Right lobe of liver (tissue), 6 donors: ENCODE measurements at regions of chr12 and their contacts with region 1.

Region 1: DNA sequence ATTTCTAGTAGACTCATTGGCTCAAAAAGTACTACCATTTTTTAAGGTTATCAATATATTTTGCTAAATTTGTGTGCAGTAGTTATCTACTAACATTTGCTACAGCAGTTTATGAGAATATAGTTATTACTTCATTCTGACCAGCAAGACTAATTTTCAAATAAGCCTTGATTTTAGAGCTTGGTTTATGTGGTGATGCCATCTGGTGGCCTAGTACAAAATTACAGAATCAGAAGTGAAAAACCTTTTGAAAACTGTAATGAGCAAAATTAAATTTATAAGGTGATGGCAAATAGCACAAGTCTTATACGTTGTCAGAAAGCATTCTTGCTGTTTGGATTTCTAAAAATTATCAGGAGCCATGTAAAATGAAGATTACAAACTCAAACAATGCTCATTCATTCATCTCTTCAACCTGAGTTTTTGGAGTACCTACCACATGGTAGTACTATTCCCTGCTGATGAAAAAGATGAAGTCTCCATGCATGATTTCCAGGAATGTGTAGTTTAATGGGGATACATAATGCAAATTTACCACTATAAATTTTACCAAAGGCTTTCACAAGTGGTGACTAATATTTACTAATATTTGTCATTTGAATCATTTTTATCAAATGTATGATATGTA is 51.0 kb downstream of the MAGOHB start:
- DNase-seq: no peak
- ATAC-seq: peak in 3 of 4 donors; percentile 60 to 68 (median 61)
- H3K4me3 ChIP-seq: no peak overlapping the region
- H3K27ac ChIP-seq: no peak overlapping the region
- H3K4me1 ChIP-seq: no peaks in the 10 kb centered on the region
- H3K27me3 ChIP-seq: no peaks in the 10 kb centered on the region
- CTCF ChIP-seq: peak; percentile 65 to 81 (median 74)
- POLR2A ChIP-seq: no peak

Region 2: GRCh38 chr12:10235761-10236631 is 326.4 kb before region 1 on chr12:
- intact Hi-C with region 1: loop called in 1 of 2 experiments (anchors 10 kb)
- DNase-seq: no peak
- ATAC-seq: peak; percentile 87 to 88 (median 88)
- H3K4me3 ChIP-seq: no peak overlapping the region
- H3K27ac ChIP-seq: no peak overlapping the region
- H3K4me1 ChIP-seq: no peaks in the 10 kb centered on the region
- H3K27me3 ChIP-seq: no peaks in the 10 kb centered on the region
- CTCF ChIP-seq: peak; percentile 82 to 90 (median 88)
- POLR2A ChIP-seq: no peak

Region 3: DNA sequence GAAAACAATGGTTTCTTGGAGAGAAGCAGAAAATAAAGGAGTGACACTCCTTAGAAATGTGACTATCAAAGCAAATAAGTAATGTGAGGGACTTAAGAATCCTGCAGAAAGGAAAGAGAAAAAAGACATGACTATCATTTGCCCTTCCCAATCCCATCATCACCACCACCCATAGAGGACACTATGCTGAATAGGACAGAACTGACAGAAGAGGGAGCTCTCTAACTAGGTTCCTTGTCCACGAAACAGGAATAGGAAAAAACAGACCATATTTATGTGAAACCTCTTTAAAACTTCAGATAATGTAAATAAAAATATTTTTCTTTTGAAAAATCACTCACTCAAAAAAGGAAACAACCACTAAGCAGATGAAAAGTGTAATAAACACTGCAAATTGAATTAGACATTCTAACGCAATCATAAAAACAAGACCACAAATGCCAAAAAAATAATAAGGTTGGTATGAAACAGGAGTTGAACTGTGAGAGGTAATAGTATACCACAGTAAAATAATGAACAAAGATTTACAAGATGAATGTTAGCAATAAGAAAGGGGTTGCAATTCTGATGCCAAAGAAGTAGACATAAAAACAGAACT is 230.7 kb before region 1 on chr12:
- intact Hi-C with region 1: loop called in 1 of 2 experiments (anchors 10 kb)
- DNase-seq: no peak
- ATAC-seq: peak; percentile 73 to 85 (median 82)
- H3K4me3 ChIP-seq: no peak overlapping the region
- H3K27ac ChIP-seq: no peak overlapping the region
- H3K4me1 ChIP-seq: no peaks in the 10 kb centered on the region
- H3K27me3 ChIP-seq: no peaks in the 10 kb centered on the region
- CTCF ChIP-seq: peak; percentile 61 to 75 (median 64)
- POLR2A ChIP-seq: no peak